ENCODE measurements at regions of chr7 and their contacts with region 1.

Region 1: DNA sequence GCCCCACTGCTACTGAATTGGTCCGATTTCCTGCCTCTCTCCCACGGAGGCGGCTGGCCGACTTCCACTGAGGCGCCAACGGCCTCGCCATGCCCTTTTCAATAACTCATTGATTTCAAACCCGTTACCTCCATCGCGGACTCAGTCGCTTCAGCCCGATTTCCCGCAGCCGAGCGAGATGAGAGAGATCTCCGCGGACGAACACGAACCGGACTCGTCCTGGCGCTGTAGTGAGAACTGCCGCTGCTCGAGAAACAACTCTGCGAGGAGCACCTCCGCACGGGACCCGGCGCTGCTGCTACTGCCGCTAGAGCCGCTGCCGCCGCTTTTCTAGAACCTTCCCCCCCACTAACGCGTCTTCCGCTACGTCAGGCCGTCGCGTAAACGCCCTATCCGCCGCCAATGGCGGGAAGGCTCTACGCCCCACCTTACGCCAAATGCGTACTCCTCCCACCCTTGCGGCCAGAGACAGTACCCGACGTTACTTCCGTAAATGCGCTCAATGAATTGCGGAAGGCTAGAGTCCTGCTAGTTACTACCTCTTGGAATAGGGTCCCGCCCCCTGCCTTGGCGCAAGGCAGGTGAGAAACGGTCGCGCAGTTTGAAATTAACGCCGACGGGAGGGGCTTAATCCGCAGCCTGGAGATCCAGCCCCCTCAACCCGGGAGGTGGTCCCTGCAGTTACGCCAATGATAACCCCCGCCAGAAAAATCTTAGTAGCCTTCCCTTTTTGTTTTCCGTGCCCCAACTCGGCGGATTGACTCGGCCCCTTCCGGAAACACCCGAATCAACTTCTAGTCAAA is at the start of gene HNRNPA2B1:
- DNase-seq: peak; percentile 96 to 99 (median 98)
- H3K4me3 ChIP-seq: peak within 1 kb of the TSS; percentile 97
- H3K27ac ChIP-seq: peak within 1 kb of the TSS; percentile 98 to 100
- H3K4me1 ChIP-seq: peaks cover 4% of the 10 kb centered on the region
- H3K27me3 ChIP-seq: no peaks in the 10 kb centered on the region
- CTCF ChIP-seq: peak in 1 of 3 donors; percentile 4
- EP300 ChIP-seq: peak; percentile 27
- POLR2A ChIP-seq: peak; percentile 100
- total RNA-seq, gene HNRNPA2B1: 236 to 451 (median 368) TPM

Region 2: DNA sequence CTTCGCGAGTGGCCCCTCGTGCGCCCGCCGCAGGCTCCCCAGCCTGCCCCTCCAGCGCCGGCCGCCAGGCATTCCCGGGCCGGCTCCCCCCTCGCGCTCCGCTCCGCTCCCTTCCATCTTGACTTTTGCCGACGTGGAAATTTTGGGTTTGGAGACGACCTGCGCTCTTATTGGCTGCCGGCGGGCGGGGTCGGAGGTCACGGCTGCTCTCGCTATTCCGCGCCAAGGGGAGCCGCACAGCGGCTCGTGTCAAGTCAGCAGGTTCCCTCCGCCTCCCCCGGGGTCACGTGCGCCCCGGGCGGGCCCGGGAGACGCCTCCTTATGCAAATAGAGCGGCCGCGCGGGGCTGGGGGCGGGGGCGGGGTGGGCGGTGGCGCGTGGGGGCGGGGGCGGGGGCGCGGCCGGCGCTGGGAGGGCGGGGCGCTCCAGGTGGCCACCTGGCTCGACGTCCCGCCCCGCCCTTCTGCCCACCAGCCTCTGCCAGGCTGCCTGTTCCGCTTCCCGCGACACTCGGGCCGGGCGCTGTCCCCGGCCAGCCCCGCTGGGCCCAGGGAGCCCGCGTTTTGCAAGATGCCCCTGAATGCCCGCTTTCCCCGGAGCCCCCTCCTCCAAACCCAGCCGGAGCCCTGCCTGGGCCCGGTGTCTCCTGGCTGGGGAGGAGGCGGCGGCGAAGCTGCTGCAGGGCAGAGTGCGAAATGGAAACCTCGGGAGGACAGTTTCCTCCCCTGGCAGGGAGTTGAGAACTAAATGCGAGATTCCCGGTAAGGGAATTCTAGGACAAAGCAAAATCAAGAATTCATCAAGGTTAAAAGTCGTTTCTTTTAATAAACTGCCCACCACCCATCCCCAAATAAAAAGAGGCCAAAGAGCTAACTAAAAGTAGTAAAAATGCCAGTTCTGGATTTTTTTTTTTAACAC is 249.4 kb before region 1 on chr7:
- intact Hi-C with region 1: loop called in 1 of 4 experiments (anchors 5 kb)
- DNase-seq: peak; percentile 95 to 98 (median 97)
- H3K4me3 ChIP-seq: peak overlapping the region; percentile 63
- H3K27ac ChIP-seq: peak overlapping the region; percentile 18 to 79
- H3K4me1 ChIP-seq: peaks cover 3% of the 10 kb centered on the region
- H3K27me3 ChIP-seq: no peaks in the 10 kb centered on the region
- CTCF ChIP-seq: no peak
- EP300 ChIP-seq: no peak
- POLR2A ChIP-seq: no peak

Region 3: DNA sequence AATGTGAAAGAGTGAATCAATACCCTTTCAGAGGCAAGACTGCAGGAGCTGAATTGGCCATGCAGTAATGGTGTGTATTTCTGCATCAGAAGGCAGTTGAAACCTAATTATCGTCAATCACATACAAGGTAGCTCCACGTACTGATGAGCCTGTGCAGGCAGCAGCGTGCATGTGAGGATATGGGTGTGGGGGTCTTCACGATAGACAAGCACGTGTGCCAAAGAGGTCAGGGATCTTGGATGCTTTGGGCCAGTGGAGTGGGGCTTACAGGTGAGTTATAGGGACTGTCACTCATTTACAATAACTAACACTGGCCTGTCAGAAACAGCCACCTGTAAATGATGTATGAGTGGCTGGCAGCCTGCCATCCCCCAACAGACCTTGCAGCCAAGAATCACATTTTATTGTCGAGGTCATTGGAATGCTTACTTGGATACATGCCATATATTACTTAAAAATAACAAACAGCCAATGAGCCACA is 452.8 kb after region 1 on chr7:
- intact Hi-C with region 1: no loop called
- DNase-seq: no peak
- H3K4me3 ChIP-seq: no peak overlapping the region
- H3K27ac ChIP-seq: no peak overlapping the region
- H3K4me1 ChIP-seq: no peaks in the 10 kb centered on the region
- H3K27me3 ChIP-seq: no peaks in the 10 kb centered on the region
- CTCF ChIP-seq: no peak
- EP300 ChIP-seq: no peak
- POLR2A ChIP-seq: no peak

Region 4: GRCh38 chr7:27150568-27151340 is 950.1 kb after region 1 on chr7:
- intact Hi-C with region 1: loop called in 1 of 4 experiments (anchors 10 kb)
- DNase-seq: peak; percentile 58 to 81 (median 64)
- H3K4me3 ChIP-seq: peak overlapping the region; percentile 74
- H3K27ac ChIP-seq: no peak overlapping the region
- H3K4me1 ChIP-seq: peaks cover 4% of the 10 kb centered on the region
- H3K27me3 ChIP-seq: peaks cover 3% of the 10 kb centered on the region
- CTCF ChIP-seq: peak; percentile 50 to 84 (median 61)
- EP300 ChIP-seq: no peak
- POLR2A ChIP-seq: no peak

Measured in ovary (tissue), 10 donors.